Aorta (tissue), 5 donors: ENCODE measurements at regions of chr3 and their contacts with region 1.

Region 1: GRCh38 chr3:15361494-15362212 is 29.3 kb upstream of the SH3BP5 start:
- DNase-seq: no peak
- ATAC-seq: peak; percentile 31
- H3K4me3 ChIP-seq: no peak overlapping the region
- H3K27ac ChIP-seq: no peak overlapping the region
- H3K4me1 ChIP-seq: peaks cover 0 to 9% of the 10 kb centered on the region in 2 donors
- H3K27me3 ChIP-seq: no peaks in the 10 kb centered on the region

Region 2: DNA sequence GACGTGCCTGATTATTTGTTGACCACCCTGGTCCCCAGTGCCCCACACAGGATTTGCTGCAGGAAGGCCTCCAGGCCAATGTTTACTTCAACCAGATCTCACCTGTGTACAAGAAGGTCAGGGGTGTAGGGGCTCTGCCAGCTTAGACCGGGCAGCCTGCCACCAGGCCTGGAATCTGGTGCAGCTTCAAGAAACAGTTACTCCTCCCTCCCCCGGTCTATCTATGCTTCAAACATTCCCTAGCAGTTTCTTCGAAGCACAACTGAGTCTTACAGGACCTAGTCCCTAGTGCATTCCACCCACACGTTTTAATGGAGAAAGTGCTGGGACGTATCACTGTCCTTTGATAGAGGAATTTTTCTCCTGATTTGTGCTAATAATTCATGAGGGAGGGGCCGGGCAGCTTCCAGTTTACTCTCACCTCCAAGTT is 37.3 kb before region 1 on chr3:
- intact Hi-C with region 1: loop called in 1 of 2 experiments (anchors 5 kb)
- DNase-seq: no peak
- ATAC-seq: no peak
- H3K4me3 ChIP-seq: no peak overlapping the region
- H3K27ac ChIP-seq: peak overlapping the region in 1 of 2 donors; percentile 37
- H3K4me1 ChIP-seq: peaks cover 2 to 3% of the 10 kb centered on the region in 2 donors
- H3K27me3 ChIP-seq: no peaks in the 10 kb centered on the region